ENCODE measurements at regions of chr22 and their contacts with region 1.

Region 1: DNA sequence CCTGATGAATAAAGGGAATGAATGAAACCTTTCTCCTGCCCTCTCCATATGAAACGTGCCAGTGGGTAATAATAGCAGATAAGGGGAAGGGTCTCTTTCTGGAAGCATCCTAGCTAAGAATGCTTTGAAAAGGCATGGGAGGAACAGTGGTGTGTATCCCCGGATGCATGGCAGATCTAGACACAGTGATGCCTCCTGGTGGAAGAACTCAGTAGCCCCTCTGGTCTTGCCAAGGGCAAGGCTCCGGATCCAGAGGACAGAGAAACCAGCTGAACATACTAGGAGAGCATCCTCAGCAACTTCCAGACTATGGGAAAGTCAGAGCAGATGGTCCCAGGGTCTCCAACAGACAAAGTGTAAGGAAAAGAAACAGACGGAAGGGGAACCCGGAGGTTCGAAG is 6.4 kb downstream of the BAIAP2L2 start:
- DNase-seq: no peak
- ATAC-seq: no peak
- H3K4me3 Mint-ChIP-seq: no peak overlapping the region
- H3K27ac Mint-ChIP-seq: no peak overlapping the region
- H3K4me1 Mint-ChIP-seq: no peaks in the 10 kb centered on the region
- H3K27me3 Mint-ChIP-seq: no peaks in the 10 kb centered on the region
- CTCF ChIP-seq: no peak

Region 2: GRCh38 chr22:38176170-38176741 is 72.2 kb after region 1 on chr22:
- CTCF ChIA-PET with region 1: no interaction called
- POLR2A ChIA-PET with region 1: no interaction called
- intact Hi-C with region 1: no loop called
- DNase-seq: no peak
- ATAC-seq: peak; percentile 35
- H3K4me3 Mint-ChIP-seq: no peak overlapping the region
- H3K27ac Mint-ChIP-seq: peak overlapping the region; percentile 35
- H3K4me1 Mint-ChIP-seq: peaks cover 50% of the 10 kb centered on the region
- H3K27me3 Mint-ChIP-seq: no peaks in the 10 kb centered on the region
- CTCF ChIP-seq: no peak

Region 3: DNA sequence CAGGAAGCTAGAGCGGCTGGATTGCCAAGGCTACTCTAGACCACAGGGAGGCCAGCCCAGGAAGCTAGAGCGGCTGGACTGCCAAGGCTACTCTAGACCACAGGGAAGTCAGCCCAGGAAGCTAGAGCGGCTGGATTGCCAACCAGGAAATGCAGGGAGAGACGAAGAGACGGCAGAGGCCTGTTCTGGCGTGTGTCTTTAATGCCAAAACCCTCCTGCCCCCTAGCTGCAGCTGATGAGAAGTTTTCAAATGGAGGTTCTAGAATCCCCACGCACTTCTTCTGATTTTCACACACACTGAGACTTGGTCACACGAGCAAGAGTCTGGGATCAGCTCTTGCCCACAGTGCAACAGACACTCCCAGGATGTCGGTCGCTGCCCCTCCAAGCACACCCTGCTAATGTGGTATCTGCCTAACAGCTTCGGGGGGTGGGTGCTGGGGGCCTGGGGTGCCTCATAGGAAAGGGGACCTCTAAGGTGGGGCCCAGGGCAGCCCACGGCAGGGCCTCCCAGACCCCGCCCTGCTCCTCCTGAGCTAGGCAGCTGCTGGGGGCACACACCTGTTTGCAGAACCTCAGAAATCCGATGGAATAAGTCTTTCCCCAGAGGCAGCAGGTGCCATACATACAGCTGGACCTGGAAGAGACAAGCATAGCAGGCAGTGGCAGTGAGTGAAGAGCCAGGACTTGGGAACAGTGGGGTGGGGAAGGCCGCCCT is 126.2 kb after region 1 on chr22:
- CTCF ChIA-PET with region 1: interaction called, 4 read pairs
- POLR2A ChIA-PET with region 1: no interaction called
- intact Hi-C with region 1: loop called (anchors 1 kb)
- DNase-seq: no peak
- ATAC-seq: peak; percentile 50
- H3K4me3 Mint-ChIP-seq: no peak overlapping the region
- H3K27ac Mint-ChIP-seq: no peak overlapping the region
- H3K4me1 Mint-ChIP-seq: no peaks in the 10 kb centered on the region
- H3K27me3 Mint-ChIP-seq: no peaks in the 10 kb centered on the region
- CTCF ChIP-seq: no peak

Region 4: GRCh38 chr22:38284042-38284402 is 179.9 kb after region 1 on chr22:
- CTCF ChIA-PET with region 1: no interaction called
- POLR2A ChIA-PET with region 1: no interaction called
- intact Hi-C with region 1: no loop called
- DNase-seq: no peak
- ATAC-seq: no peak
- H3K4me3 Mint-ChIP-seq: no peak overlapping the region
- H3K27ac Mint-ChIP-seq: no peak overlapping the region
- H3K4me1 Mint-ChIP-seq: no peaks in the 10 kb centered on the region
- H3K27me3 Mint-ChIP-seq: no peaks in the 10 kb centered on the region
- CTCF ChIP-seq: no peak

Region 5: GRCh38 chr22:38338772-38339379 is 234.8 kb after region 1 on chr22:
- CTCF ChIA-PET with region 1: no interaction called
- POLR2A ChIA-PET with region 1: interaction called, 10 read pairs
- intact Hi-C with region 1: no loop called
- DNase-seq: no peak
- ATAC-seq: no peak
- H3K4me3 Mint-ChIP-seq: no peak overlapping the region
- H3K27ac Mint-ChIP-seq: no peak overlapping the region
- H3K4me1 Mint-ChIP-seq: peaks cover 8% of the 10 kb centered on the region
- H3K27me3 Mint-ChIP-seq: peaks cover 4% of the 10 kb centered on the region
- CTCF ChIP-seq: no peak